Activated T-helper 2 cell treated with anti-CD3 and anti-CD28 coated beads, Interferon-gamma antibody, Interleukin-2, Interleukin-4, amounts not matched to agents 10 μg/mL and 5 μg/mL and 100 μg/mL, durations not matched to agents 14 hours and 24 hours and 36 hours (primary cell): ENCODE measurements at regions of chr10 and their contacts with region 1.

Region 1: GRCh38 chr10:113678690-113679462 is 836 bp upstream of the CASP7 start:
- DNase-seq: peak; percentile 61
- H3K4me3 Mint-ChIP-seq: peak overlapping the region; percentile 92
- H3K27ac Mint-ChIP-seq: peak overlapping the region; percentile 55
- H3K4me1 Mint-ChIP-seq: peaks cover 40% of the 10 kb centered on the region
- H3K27me3 Mint-ChIP-seq: peaks cover 14% of the 10 kb centered on the region

Region 2: GRCh38 chr10:112446855-112447711 is 1231.8 kb before region 1 on chr10 and contains the starts of genes VTI1A and ZDHHC6:
- intact Hi-C with region 1: loop called (anchors 5 kb)
- DNase-seq: peak; percentile 80
- H3K4me3 Mint-ChIP-seq: peak within 1 kb of the TSS; percentile 97
- H3K27ac Mint-ChIP-seq: peak within 1 kb of the TSS; percentile 93
- H3K4me1 Mint-ChIP-seq: peaks cover 39% of the 10 kb centered on the region
- H3K27me3 Mint-ChIP-seq: no peaks in the 10 kb centered on the region
- total RNA-seq, gene VTI1A: 33.6 and 39.5 TPM in 2 replicates
- total RNA-seq, gene ZDHHC6: 42.9 and 43.2 TPM in 2 replicates

Region 3: DNA sequence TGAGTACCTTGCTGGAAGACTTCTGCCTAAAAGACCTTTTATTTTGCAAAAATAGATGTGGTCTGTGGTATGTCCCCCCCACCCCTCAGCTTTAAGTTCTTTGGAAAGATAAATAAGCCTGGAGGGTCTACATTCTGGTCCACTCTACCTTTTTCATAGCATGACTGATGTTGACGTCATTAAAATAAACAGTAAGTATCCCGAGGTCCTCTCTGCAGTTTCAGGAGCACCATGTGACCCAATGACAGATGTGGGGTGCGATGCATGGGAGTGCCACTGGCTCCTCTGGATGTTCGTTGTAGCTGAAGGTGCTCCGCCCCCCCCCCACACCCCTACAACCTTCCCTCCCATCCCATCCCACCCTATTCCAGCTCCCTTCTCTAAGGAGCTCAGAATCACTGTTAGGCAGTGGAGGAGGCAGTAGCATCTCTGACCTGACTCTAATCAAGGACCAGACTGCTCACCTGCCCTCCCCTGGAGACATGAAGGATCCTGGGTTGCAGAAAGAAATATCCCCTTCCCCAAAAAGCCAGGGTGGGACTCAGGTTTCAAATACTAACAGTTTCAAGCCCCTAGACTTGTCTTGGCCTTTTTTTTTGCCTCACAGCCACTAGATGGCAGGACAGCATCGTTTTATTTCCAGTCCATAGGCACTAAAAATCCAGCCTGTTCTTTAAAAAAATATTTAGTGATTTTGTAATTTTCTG is 25.9 kb after region 1 on chr10:
- intact Hi-C with region 1: loop called (anchors 2 kb)
- DNase-seq: no peak
- H3K4me3 Mint-ChIP-seq: no peak overlapping the region
- H3K27ac Mint-ChIP-seq: no peak overlapping the region
- H3K4me1 Mint-ChIP-seq: peaks cover 32% of the 10 kb centered on the region
- H3K27me3 Mint-ChIP-seq: no peaks in the 10 kb centered on the region

Region 4: GRCh38 chr10:113958631-113959382 is 279.9 kb after region 1 on chr10:
- intact Hi-C with region 1: loop called (anchors 2 kb)
- DNase-seq: no peak
- H3K4me3 Mint-ChIP-seq: no peak overlapping the region
- H3K27ac Mint-ChIP-seq: no peak overlapping the region
- H3K4me1 Mint-ChIP-seq: peaks cover 48% of the 10 kb centered on the region
- H3K27me3 Mint-ChIP-seq: peaks cover 14% of the 10 kb centered on the region

Region 5: DNA sequence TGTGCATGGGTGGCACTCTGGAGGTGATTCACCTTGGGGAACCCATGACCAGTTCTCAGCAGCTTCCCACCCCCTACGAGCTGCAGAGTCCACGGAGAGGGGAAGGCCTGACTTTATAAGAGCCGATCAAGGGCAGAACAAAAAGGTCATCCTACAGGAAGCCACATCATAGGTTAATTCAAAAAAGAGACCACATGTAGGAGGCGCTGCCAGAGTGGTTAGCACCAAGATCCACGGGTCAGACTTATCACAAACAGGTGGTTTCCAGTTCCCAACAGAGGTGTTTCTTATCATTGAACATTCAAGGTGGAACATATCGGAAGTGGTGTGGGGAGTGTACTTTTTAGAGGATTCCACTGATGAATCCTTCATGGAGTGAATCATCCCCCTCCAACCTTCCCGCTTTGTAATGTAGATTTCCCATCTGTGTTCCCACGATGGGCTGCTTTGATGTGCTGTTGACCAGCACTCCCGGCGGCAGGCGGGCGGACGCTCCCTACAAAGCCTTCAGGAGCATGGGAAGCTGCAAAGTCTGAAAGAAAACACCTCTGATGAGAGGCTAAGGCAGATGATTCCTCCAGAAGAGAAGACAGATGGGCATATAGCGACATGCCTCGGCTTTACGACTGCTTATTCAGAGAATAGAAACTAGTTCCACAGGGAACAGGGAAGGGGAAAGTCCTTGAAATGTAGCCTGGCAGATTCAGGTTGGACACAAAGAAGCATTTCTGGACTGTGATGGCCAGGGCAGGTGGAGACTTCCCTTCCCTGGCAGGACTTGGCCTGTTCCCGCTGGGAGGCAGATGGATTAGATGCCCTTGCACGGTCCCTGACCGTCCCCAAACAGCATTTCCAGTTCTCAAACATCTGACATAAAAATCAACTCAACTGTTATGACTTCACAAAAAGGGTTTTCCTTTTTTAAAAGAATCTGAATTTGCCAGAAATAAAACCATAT is 658.9 kb after region 1 on chr10:
- intact Hi-C with region 1: loop called (anchors 10 kb)
- DNase-seq: no peak
- H3K4me3 Mint-ChIP-seq: no peak overlapping the region
- H3K27ac Mint-ChIP-seq: peak overlapping the region; percentile 46
- H3K4me1 Mint-ChIP-seq: peaks cover 33% of the 10 kb centered on the region
- H3K27me3 Mint-ChIP-seq: peaks cover 2% of the 10 kb centered on the region